ENCODE measurements at regions of chr1 and their contacts with region 1.

Region 1: DNA sequence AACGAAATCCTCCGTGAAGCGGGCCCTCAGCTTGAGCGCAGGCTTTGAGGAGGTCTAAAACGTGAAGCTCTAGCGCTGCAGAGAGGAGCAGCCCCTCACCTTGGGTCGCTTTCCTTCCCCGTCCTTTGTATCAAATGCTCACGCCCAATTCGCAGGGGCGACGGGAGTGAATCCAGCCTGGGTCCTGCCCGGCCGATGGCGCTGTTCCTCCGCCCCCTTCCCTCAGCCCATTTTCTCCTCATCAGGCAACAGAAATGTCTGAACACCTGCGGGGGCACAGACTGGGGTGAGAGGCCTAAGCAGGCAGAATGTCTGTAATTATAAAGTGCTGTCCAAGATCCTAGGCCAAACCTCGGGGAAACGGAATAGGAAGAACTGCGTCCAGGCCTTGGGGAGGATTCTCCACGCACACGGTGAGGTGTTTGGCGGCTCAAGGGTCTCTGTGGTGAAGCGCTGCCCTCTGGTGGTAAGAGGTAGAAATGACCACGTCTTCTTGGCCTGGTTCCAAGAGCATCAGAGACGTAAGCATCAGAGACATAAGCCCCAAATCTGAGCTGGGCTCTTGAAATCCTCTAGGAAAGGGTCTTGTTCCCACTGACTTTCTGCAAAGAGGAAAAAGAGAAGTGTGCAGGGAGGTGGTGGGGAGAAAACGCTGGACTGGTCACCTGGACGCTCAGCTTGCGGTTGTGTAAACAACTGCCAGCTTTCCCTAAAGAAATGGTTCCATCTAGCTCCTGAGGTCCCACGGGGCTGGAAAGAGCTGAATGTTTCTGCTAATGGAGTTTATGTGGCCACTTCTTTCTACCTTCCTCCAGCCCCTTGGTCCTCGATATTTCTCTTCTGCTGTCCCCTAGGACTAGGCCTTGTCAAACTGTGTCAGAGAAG is 92.1 kb upstream of the CD53 start:
- DNase-seq: peak; percentile 79
- H3K4me3 Mint-ChIP-seq: no peak overlapping the region
- H3K27ac Mint-ChIP-seq: no peak overlapping the region
- H3K4me1 Mint-ChIP-seq: no peaks in the 10 kb centered on the region
- H3K27me3 Mint-ChIP-seq: peaks cover 17% of the 10 kb centered on the region
- CTCF ChIP-seq: peak; percentile 76

Region 2: DNA sequence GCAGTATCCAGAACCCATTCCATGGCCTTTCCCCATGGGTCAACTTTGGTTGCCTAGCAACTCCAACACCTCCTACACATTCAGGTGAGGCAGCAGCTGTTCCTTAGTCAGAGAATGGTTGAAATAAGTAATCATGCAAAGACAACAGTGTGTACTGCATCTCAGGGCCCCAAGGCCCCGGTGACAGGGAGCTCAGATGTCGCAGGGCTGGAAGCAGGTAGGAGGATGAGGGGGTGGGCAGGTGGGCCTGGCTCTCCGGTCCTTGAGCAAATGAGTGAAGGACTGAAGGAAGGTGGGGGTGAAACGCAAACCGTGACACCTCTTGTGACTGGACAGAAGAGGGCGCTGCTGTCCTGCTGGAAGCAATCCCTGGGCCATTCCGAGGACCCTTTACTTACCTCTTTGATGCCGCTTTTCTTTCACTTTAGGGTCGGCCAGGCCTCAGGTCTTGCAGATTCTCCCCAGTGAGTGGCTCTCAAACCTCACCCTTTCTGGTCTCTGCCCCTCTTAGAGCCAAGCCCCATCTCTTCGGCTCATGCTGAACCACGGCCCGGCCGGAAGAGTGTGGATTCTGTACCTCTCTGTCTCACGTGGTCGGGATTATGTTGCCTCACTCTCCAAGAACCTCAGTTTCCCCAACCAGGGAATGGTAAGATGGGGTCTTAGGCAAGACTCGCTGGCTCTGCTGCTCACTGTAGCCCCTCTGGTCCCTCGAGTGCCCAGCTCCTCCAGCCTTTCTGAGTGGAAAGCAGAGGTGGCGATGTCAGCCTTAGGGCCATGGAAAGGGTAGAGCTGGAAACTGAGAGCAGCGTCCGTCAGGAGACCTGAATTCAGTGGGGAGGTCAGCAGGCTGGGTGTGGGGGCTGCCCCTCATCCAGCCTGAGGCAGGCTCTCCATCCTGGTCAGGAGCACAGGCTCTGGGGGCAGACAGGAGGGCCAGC is 256.3 kb before region 1 on chr1:
- CTCF ChIA-PET with region 1: interaction called, 6 read pairs
- POLR2A ChIA-PET with region 1: no interaction called
- intact Hi-C with region 1: loop called (anchors 1 kb)
- DNase-seq: peak; percentile 40
- H3K4me3 Mint-ChIP-seq: no peak overlapping the region
- H3K27ac Mint-ChIP-seq: no peak overlapping the region
- H3K4me1 Mint-ChIP-seq: peaks cover 8% of the 10 kb centered on the region
- H3K27me3 Mint-ChIP-seq: peaks cover 65% of the 10 kb centered on the region
- CTCF ChIP-seq: peak; percentile 78

Region 3: GRCh38 chr1:110630839-110631663 is 149.8 kb before region 1 on chr1:
- CTCF ChIA-PET with region 1: interaction called, 52 read pairs
- POLR2A ChIA-PET with region 1: no interaction called
- intact Hi-C with region 1: loop called (anchors 2 kb)
- DNase-seq: peak; percentile 74
- H3K4me3 Mint-ChIP-seq: no peak overlapping the region
- H3K27ac Mint-ChIP-seq: no peak overlapping the region
- H3K4me1 Mint-ChIP-seq: peaks cover 13% of the 10 kb centered on the region
- H3K27me3 Mint-ChIP-seq: peaks cover 31% of the 10 kb centered on the region
- CTCF ChIP-seq: peak; percentile 80

Region 4: DNA sequence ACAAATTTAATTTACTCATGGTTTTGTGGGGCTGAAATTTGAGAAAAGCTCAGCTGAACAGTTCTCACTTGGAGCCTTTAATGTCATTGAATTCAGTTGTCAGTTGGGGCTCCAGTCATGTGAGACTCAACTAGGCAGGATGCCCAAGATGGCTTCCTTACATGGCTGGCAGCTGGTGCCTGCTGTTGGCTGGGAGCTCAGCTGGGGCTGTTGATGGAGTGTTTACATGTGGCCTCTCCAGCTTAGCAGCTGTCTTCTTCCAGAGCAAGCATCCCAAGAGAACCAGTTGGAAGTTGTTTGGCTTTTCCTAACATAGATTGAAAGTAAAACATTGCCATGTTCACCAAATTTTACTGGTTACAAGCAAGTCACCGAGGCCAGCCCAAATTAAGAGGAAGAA is 24.3 kb before region 1 on chr1:
- CTCF ChIA-PET with region 1: interaction called, 14 read pairs
- POLR2A ChIA-PET with region 1: no interaction called
- intact Hi-C with region 1: no loop called
- DNase-seq: no peak
- H3K4me3 Mint-ChIP-seq: no peak overlapping the region
- H3K27ac Mint-ChIP-seq: no peak overlapping the region
- H3K4me1 Mint-ChIP-seq: no peaks in the 10 kb centered on the region
- H3K27me3 Mint-ChIP-seq: peaks cover 69% of the 10 kb centered on the region
- CTCF ChIP-seq: no peak

Region 5: GRCh38 chr1:110798691-110799256 is 17.9 kb after region 1 on chr1:
- CTCF ChIA-PET with region 1: interaction called, 13 read pairs
- POLR2A ChIA-PET with region 1: no interaction called
- intact Hi-C with region 1: no loop called
- DNase-seq: no peak
- H3K4me3 Mint-ChIP-seq: no peak overlapping the region
- H3K27ac Mint-ChIP-seq: no peak overlapping the region
- H3K4me1 Mint-ChIP-seq: no peaks in the 10 kb centered on the region
- H3K27me3 Mint-ChIP-seq: peaks cover 32% of the 10 kb centered on the region
- CTCF ChIP-seq: no peak

Measured in MCF 10A (cell line).